ENCODE measurements at regions of chr12 and their contacts with region 1.

Region 1: DNA sequence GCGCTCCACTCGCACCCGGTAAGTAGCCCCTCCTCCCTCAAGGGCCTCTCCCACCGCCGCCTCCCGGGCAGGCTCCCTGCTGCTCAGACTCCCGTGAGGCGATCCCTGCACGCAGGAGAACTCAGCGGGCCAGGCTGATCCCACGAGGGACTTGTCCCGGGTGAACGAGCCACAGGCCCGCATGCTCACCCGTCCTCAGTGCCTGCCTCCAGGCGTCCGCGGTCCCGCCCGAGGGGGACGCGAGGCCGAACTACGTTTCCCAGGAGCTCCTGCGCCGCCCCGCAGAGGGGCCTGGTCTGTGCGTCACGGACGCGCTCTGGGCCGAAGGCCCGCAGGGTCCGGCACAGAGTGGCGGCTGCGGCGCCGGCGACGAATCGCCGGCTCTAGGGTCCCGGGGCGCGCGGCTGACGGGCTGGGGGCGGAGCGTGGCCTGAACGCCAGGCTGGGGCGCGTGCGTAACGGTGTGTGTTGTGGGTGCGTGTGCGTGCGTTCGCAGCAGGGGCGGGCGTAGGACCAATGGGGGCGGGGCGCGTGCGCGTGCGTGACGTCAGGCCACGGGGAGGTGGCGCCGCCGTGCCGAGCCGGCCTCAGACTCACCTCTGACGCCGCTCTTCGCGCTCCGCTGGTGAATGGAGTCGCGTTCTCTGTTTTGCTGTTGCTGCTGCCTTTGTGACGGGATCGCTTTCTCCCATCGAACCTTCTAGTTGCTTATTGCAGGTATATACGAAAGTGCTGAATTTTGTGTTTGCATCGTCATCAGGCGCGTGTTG is at the starts of genes ZNF10 and ZNF891:
- DNase-seq: peak; percentile 97
- H3K4me3 ChIP-seq: peak within 1 kb of the TSS; percentile 63 to 91 (median 84)
- H3K27ac ChIP-seq: peak within 1 kb of the TSS; percentile 73
- H3K4me1 ChIP-seq: no peaks in the 10 kb centered on the region
- H3K27me3 ChIP-seq: no peaks in the 10 kb centered on the region
- CTCF ChIP-seq: no peak
- total RNA-seq, gene ZNF10: 8.4 to 14.2 TPM
- total RNA-seq, gene ZNF891: 0.83 to 1.1 TPM

Region 2: GRCh38 chr12:133181238-133181959 is 51.2 kb after region 1 on chr12 and contains the start of gene ZNF268:
- CTCF ChIA-PET with region 1: no interaction called
- dilution Hi-C with region 1: no loop called
- in situ Hi-C with region 1: no loop called
- intact Hi-C with region 1: loop called (anchors 1 kb)
- DNase-seq: peak; percentile 81
- H3K4me3 ChIP-seq: peak within 1 kb of the TSS; percentile 94 to 98 (median 97)
- H3K27ac ChIP-seq: peak within 1 kb of the TSS; percentile 66
- H3K4me1 ChIP-seq: peaks cover 3% of the 10 kb centered on the region
- H3K27me3 ChIP-seq: no peaks in the 10 kb centered on the region
- CTCF ChIP-seq: peak; percentile 67 to 80
- total RNA-seq, gene ZNF268: 15.9 to 29.5 TPM

Region 3: DNA sequence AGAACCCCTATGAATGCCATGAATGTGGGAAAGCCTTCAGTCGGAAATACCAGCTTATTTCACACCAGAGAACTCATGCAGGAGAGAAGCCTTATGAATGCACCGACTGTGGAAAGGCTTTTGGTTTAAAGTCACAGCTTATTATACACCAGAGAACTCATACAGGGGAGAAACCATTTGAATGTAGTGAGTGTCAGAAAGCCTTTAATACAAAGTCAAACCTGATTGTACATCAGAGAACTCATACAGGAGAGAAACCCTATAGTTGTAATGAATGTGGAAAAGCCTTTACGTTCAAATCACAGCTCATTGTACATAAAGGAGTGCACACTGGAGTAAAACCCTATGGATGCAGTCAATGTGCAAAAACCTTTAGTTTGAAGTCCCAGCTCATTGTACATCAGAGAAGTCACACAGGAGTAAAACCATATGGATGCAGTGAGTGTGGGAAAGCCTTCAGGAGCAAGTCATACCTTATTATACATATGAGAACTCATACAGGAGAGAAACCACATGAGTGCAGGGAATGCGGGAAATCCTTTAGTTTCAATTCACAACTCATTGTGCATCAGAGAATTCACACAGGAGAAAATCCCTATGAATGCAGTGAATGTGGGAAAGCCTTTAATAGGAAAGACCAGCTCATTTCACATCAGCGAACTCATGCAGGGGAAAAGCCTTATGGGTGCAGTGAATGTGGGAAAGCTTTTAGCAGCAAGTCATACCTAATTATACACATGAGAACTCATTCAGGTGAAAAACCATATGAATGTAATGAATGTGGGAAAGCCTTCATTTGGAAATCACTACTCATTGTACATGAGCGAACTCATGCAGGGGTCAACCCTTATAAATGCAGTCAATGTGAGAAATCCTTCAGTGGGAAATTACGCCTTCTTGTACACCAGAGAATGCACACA is 73.4 kb after region 1 on chr12:
- CTCF ChIA-PET with region 1: no interaction called
- dilution Hi-C with region 1: no loop called
- in situ Hi-C with region 1: no loop called
- intact Hi-C with region 1: no loop called
- DNase-seq: no peak
- H3K4me3 ChIP-seq: no peak overlapping the region
- H3K27ac ChIP-seq: no peak overlapping the region
- H3K4me1 ChIP-seq: no peaks in the 10 kb centered on the region
- H3K27me3 ChIP-seq: no peaks in the 10 kb centered on the region
- CTCF ChIP-seq: no peak

Measured in mammary epithelial cell (primary cell).